A549 (cell line): ENCODE measurements at regions of chr20 and their contacts with region 1.

Region 1: DNA sequence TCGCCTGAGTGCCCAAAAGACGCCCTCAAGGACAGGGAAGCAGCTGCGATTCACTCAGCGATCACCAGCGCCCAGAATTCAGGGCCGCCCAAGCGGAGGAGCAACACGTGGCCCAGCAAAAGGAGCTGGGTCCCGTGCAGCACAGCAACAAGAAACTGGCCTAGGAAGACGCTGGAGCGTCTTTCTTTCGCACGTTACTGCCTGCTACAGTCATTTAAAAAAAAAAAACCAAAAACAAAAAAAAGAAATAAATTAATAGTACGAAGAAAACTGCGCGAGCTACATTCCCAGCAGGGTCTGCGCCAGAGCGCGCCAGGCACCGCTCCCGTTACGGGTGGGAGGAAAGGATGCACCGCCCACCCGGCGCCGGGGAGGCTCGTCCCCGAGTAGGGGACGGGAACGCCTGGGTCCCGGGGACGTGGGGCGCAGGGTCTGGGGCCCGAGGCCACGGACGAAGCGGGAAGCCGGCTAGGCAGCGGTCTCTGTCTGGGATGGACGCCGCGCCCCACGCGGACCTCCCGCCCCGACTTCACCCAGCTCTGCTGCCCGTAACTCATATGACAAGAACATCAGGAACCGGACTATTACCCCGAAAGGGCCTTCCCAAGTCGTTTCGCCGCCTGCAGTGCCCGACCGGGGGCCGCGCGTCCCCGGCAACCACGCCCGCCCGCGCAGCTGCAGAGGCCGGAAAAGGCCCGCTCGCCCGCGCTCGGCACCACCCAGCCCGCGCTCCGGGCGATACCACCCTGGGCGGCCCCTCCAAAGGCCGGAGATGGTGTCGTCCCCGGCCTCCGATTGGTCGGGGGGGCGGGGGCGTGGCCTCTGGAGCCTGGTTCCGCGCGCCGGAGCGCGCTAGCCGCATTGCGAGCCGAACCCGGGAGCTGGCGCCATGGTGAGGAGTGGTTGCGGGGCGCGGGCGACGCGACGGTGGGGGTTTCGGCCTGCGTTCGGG is at the start of gene NOP56:
- DNase-seq: peak; percentile 85 to 97
- ATAC-seq: peak; percentile 88 to 95
- H3K4me3 ChIP-seq: peak within 1 kb of the TSS; percentile 78
- H3K27ac ChIP-seq: peak within 1 kb of the TSS; percentile 95 to 96
- H3K4me1 ChIP-seq: peaks cover 34% of the 10 kb centered on the region
- CTCF ChIP-seq: no peak
- EP300 ChIP-seq: 0 out of 5 replicates have a peak, but pooled peaks of 1 of the 2 experiments have one; percentile 2
- POLR2A ChIP-seq: peak; percentile 99
- RAD21 ChIP-seq: no peak
- polyA plus RNA-seq, gene NOP56: 471 and 571 TPM in 2 replicates

Region 2: DNA sequence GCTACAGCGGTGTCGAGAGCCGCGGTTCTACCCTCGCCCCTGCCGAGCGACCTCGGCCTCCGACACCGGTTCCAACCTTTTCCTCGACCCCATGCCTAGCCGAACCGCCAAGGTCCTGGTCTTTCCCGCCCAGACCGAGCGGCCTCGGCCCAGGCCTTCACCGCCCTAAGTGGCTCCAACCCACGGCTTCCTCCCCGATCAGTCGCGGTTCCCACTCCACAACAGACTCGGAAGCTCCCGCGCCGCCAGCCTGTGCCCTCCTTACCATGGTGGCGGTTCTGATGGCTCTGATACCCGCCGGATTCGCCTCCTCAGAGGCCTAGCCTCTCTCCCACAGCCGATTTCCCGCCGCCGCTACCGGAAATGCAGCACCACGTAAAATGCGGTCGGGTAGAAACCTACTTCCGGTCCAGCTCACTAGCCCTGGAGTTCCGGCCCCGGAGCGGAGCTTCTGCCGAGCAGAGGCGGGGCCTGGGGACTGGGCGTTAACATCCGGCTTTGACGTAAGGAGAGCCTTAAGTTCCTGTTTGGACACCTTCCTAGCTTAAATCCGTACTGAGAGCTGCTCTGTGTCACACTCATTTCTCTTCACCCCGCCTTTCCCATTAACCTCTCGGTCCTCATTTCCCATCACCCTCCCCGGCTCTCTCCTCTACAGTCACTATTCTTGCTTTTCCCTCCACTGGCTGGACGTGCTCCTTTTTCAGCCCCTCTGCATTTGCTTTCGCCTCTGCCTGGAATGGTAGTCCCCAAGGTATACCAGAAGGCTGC is 181.4 kb before region 1 on chr20 and contains the start of gene SNRPB:
- CTCF ChIA-PET with region 1: interaction called, 3 read pairs
- POLR2A ChIA-PET with region 1: interaction called, 29 read pairs
- DNase-seq: peak; percentile 99 to 100
- ATAC-seq: peak; percentile 97 to 98
- H3K4me3 ChIP-seq: peak within 1 kb of the TSS; percentile 67
- H3K27ac ChIP-seq: peak within 1 kb of the TSS; percentile 92 to 93
- H3K4me1 ChIP-seq: peaks cover 25% of the 10 kb centered on the region
- CTCF ChIP-seq: no peak
- EP300 ChIP-seq: no peak
- POLR2A ChIP-seq: peak; percentile 91
- RAD21 ChIP-seq: no peak
- polyA plus RNA-seq, gene SNRPB: 486 and 557 TPM in 2 replicates

Region 3: GRCh38 chr20:2626853-2627541 is 25.1 kb before region 1 on chr20:
- CTCF ChIA-PET with region 1: interaction called, 12 read pairs
- POLR2A ChIA-PET with region 1: interaction called, 7 read pairs
- DNase-seq: peak in 1 of 2 experiments; percentile 89
- ATAC-seq: peak; percentile 75 to 86
- H3K4me3 ChIP-seq: no peak overlapping the region
- H3K27ac ChIP-seq: peak overlapping the region; percentile 50 to 65
- H3K4me1 ChIP-seq: peaks cover 12% of the 10 kb centered on the region
- CTCF ChIP-seq: no peak
- EP300 ChIP-seq: no peak
- POLR2A ChIP-seq: no peak
- RAD21 ChIP-seq: no peak

Region 4: GRCh38 chr20:2637246-2637645 is 14.8 kb before region 1 on chr20:
- CTCF ChIA-PET with region 1: interaction called, 29 read pairs
- POLR2A ChIA-PET with region 1: interaction called, 16 read pairs
- DNase-seq: no peak
- ATAC-seq: no peak
- H3K4me3 ChIP-seq: no peak overlapping the region
- H3K27ac ChIP-seq: no peak overlapping the region
- H3K4me1 ChIP-seq: peaks cover 6% of the 10 kb centered on the region; the same call in 2 of the 3 replicates
- CTCF ChIP-seq: no peak
- EP300 ChIP-seq: no peak
- POLR2A ChIP-seq: no peak
- RAD21 ChIP-seq: no peak

Region 5: GRCh38 chr20:2663887-2664719 is 12.1 kb after region 1 on chr20 and contains the start of gene IDH3B:
- CTCF ChIA-PET with region 1: interaction called, 32 read pairs
- POLR2A ChIA-PET with region 1: interaction called, 50 read pairs
- DNase-seq: peak; percentile 95 to 96
- ATAC-seq: peak; percentile 84 to 90
- H3K4me3 ChIP-seq: peak within 1 kb of the TSS; percentile 94
- H3K27ac ChIP-seq: peak within 1 kb of the TSS; percentile 84 to 85
- H3K4me1 ChIP-seq: peaks cover 11% of the 10 kb centered on the region; the same call in 2 of the 3 replicates
- CTCF ChIP-seq: no peak
- EP300 ChIP-seq: no peak
- POLR2A ChIP-seq: peak; percentile 89
- RAD21 ChIP-seq: no peak
- polyA plus RNA-seq, gene IDH3B: 188 and 200 TPM in 2 replicates